ENCODE measurements at regions of chr3 and their contacts with region 1.

Region 1: DNA sequence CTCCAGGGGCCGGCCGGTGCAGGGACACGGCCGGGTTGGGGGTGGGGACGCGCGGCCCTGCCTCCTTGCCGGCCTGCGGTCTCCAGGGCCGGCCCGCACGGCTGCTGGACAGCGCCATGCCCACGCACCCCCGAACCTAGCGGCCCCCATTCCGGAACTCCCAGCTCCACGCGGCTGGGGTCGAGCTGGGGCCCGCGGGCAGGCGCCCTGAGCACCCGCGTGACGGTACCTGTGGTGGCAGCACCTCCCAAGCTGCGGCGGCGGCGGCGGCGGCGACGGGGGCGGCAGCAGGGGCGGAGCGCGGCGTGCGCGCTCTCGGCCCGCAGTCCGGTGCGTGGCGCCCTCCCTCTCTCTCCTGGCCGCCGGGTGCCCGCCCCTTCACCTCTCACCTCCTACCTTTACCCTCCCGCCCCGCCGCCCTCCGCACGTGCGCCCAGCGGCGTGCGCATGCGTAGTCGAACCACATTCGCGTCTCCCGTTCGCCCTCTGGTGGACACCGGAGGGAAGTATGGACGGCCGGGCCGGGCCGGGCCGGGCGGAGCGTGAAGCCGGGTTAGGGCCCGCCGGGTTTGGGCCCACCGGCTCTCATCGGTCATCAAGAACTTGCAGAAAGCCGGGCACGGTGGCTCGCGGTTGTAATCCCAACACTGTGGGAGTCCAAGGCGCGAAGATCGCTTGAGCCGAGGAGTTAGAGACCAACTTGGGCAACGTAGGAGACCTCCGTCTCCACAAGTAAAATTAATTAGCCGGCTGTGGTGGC is at the start of gene SCAP:
- DNase-seq: peak; percentile 97
- CTCF ChIP-seq: peak; percentile 95

Region 2: DNA sequence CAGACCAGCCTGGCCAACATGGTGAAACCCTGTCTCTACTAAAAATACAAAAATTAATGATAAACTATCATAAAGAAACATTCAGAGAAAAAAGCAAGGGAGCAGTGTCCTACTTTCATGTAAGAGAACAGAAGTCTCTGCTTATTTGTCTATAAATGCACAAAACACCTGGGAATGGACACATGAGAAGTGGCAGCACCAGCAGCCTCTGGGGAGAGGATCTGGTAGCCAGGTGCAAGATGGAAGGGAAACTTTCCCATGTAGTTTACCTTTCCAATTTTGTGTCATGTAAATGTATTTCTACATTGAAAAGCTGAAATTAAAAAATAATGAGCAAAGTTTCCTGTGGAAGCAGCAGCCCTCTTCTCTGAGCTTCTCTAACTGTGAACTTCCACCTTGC is 18.8 kb before region 1 on chr3:
- CTCF ChIA-PET with region 1: interaction called, 14 read pairs
- POLR2A ChIA-PET with region 1: interaction called, 3 read pairs
- DNase-seq: no peak
- CTCF ChIP-seq: no peak

Region 3: DNA sequence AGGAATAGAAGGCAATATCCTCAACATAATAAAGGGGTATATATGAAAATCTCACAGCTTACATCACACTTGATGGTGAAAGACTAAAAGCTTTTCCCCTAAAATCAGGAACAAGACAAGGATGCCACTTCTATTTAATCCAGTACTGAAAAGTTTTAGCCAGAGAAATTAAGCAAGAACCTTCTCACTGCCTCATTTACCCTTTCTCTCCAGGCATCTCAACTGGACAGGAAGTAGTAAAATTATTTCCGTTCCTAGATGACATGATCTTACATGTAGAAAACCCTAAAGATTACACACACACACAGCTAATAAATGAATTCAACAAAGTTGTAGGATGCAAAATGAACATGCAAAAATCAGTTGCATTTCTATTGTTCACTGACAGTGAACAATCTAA is 11.2 kb before region 1 on chr3:
- CTCF ChIA-PET with region 1: interaction called, 10 read pairs
- POLR2A ChIA-PET with region 1: interaction called, 3 read pairs
- DNase-seq: no peak
- CTCF ChIP-seq: no peak

Region 4: DNA sequence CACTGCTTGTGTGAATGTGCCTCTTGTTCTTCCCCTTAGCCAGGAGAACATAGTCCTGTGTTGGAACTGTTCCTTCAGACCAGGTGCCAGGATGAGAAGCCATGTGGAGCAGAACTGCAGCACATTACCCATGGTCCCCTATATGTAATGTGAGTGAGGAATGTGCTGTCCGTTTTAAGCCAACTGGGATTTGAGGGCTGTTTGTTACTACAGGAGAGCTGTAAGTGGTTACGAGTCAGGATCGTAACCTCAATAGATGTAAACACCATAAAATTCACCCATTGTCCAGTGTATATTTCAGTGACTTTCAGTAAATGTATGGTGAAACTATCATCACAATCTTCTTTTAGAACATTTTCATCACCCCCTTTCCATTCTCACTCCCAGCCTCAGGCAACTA is 10.1 kb after region 1 on chr3:
- CTCF ChIA-PET with region 1: interaction called, 14 read pairs
- POLR2A ChIA-PET with region 1: no interaction called
- DNase-seq: no peak
- CTCF ChIP-seq: no peak

Region 5: DNA sequence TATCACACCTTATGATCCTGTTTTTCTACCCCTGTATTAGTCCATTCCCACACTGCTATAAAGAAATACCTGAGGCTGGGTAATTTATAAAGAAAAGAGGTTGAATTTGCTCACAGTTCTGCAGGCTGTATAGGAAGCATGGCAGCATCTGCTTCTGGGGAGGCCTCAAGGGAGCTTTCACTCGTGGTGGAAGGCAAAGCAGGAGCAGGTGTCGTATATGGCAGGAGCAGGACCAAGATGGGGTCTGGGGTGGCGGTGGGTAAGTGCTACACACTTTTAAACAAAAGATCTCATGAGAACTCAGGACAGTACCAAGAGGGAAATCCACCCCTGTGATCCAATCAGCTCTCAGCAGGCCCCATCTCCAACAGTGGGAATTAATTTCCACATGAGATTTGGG is 15.4 kb after region 1 on chr3:
- CTCF ChIA-PET with region 1: interaction called, 14 read pairs
- POLR2A ChIA-PET with region 1: no interaction called
- DNase-seq: no peak
- CTCF ChIP-seq: no peak

Measured in GM10248 (cell line).